ENCODE measurements at regions of chr2 and their contacts with region 1.

Region 1: GRCh38 chr2:62787386-62787785 is 81.9 kb downstream of the EHBP1 start:
- DNase-seq: peak; percentile 69
- H3K4me3 ChIP-seq: no peak overlapping the region
- H3K27ac ChIP-seq: no peak overlapping the region
- H3K4me1 ChIP-seq: peaks cover 4% of the 10 kb centered on the region
- H3K27me3 ChIP-seq: no peaks in the 10 kb centered on the region
- CTCF ChIP-seq: peak in 1 of 2 donors; percentile 12
- POLR2A ChIP-seq: no peak

Region 2: DNA sequence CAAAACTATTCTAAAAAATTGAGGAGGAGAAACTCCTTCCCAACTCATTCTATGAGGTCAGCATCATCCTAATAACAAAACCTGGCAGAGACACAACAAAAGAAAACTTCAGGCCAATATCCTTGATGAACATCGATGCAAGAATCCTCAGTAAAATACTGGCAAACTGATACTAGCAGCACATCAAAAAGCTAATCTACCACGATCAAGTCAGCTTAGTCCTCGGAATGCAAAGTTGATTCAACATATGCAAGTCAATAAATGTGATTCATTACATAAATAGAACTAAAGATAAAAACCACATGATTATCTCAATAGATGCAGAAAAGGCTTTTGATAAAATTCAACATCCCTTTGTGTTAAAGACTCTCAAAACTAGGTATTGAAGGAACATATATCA is 18.8 kb before region 1 on chr2:
- CTCF ChIA-PET with region 1: no interaction called
- POLR2A ChIA-PET with region 1: no interaction called
- dilution Hi-C with region 1: no loop called
- intact Hi-C with region 1: no loop called
- DNase-seq: no peak
- H3K4me3 ChIP-seq: no peak overlapping the region
- H3K27ac ChIP-seq: no peak overlapping the region
- H3K4me1 ChIP-seq: no peaks in the 10 kb centered on the region
- H3K27me3 ChIP-seq: no peaks in the 10 kb centered on the region
- CTCF ChIP-seq: no peak
- POLR2A ChIP-seq: no peak

Region 3: DNA sequence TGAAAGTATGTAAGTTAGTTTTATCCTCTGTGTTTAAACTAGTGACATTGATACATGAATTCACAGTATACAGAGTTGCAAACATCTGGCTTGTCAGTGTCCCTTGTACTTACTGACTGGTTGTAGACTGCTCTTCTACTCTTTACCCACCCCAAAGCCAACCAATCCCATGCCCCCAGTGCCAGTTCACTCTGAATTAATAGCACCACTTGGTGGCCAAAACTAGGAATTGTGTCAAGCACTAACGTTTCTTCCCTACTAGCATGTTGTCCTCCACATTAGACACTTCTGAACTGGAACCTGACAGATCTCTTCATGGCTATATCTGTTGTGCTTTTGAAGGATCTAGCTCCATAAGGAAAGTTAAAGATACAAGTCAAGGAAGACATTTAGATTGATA is 236.1 kb after region 1 on chr2:
- CTCF ChIA-PET with region 1: interaction called, 10 read pairs
- POLR2A ChIA-PET with region 1: no interaction called
- dilution Hi-C with region 1: no loop called
- intact Hi-C with region 1: loop called (anchors 1 kb)
- DNase-seq: peak; percentile 67
- H3K4me3 ChIP-seq: no peak overlapping the region
- H3K27ac ChIP-seq: no peak overlapping the region
- H3K4me1 ChIP-seq: peaks cover 3% of the 10 kb centered on the region
- H3K27me3 ChIP-seq: no peaks in the 10 kb centered on the region
- CTCF ChIP-seq: peak; percentile 42 to 43
- POLR2A ChIP-seq: no peak

Region 4: DNA sequence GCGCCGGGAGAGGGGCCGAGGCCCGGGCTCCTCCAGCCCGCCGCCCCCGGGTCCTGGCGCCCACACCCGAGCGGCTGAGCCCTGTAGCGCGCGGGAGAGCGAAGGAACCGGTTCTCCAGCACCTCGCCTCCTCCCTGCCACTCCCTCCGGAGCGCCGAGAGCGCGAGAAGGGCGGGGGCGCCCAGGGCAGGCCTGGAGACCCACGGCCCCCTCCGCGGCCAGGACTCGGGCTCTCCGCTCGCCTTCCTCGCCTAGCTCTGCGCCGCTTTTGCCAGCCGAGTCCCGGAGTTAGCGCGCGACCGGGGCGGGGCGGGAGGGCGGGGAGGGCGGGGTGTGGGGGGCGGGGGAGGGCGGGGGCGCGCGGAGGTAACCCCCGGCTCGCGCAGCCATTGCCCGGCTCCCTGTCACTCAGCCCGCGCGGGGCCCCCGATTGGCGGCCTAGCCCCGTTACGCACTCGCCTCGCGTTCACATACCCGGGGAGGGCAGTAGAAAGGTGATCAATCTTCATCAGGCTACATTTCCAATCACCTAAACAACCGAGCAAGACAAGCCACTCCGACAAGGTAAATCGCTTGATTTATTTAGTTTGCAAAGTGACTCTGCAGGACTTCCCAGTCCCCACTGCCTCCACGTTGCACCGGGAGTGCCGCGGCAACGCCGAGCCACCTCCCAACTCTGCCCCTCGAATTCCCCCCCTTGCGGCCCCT is 263.1 kb after region 1 on chr2 and contains the start of gene OTX1:
- CTCF ChIA-PET with region 1: no interaction called
- POLR2A ChIA-PET with region 1: no interaction called
- dilution Hi-C with region 1: no loop called
- intact Hi-C with region 1: loop called (anchors 1 kb)
- DNase-seq: peak; percentile 39
- H3K4me3 ChIP-seq: peak within 1 kb of the TSS; percentile 8 to 42 (median 41)
- H3K27ac ChIP-seq: no peak within 1 kb of the TSS
- H3K4me1 ChIP-seq: peaks cover 25% of the 10 kb centered on the region
- H3K27me3 ChIP-seq: peaks cover 71 to 76% of the 10 kb centered on the region in 2 experiments
- CTCF ChIP-seq: no peak
- POLR2A ChIP-seq: no peak
- total RNA-seq, gene OTX1: 0.30 TPM in 1 of 2 replicates, not detected in the other

Region 5: GRCh38 chr2:63189026-63189425 is 401.6 kb after region 1 on chr2:
- CTCF ChIA-PET with region 1: interaction called, 4 read pairs
- POLR2A ChIA-PET with region 1: no interaction called
- dilution Hi-C with region 1: no loop called
- intact Hi-C with region 1: loop called (anchors 1 kb)
- DNase-seq: peak; percentile 39
- H3K4me3 ChIP-seq: no peak overlapping the region
- H3K27ac ChIP-seq: no peak overlapping the region
- H3K4me1 ChIP-seq: no peaks in the 10 kb centered on the region
- H3K27me3 ChIP-seq: no peaks in the 10 kb centered on the region
- CTCF ChIP-seq: peak; percentile 73 to 88
- POLR2A ChIP-seq: no peak

Region 6: DNA sequence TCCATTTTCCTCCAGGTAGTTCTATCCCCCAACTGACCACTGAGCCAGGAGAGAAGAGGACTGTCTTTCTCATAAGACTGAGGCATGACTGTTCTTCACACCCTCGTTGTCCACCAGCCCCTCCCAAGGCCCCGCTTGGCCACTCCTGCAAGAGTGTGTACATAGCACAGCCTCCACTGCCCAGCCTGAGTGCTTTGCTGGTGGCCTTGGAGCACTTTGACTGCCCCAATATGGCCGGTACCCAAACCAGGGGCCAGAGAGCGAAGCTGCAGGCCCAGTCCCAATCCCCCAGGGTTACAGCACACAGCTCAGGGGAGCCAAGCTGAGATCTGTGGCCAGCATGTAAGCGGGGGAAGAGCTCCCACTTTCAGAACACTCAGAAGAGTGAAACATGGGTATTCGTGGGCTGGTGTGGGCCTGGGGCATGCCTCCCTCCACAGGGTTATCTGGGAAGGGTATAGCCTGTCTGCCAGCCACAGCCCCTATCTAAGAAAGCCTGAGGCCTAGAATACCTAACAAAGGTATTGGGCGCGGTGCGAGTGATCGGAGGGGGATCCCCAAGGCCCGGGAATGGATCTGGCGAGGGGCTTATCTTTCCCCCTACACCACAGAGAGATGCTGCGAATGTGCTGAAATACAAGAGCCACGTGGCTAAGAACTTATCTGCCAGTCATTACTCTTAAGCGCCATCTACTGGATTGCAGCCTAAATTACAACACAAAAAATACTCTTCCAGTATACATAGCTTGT is 637.1 kb after region 1 on chr2:
- CTCF ChIA-PET with region 1: interaction called, 9 read pairs
- POLR2A ChIA-PET with region 1: no interaction called
- dilution Hi-C with region 1: no loop called
- intact Hi-C with region 1: loop called (anchors 1 kb)
- DNase-seq: peak; percentile 33
- H3K4me3 ChIP-seq: no peak overlapping the region
- H3K27ac ChIP-seq: no peak overlapping the region
- H3K4me1 ChIP-seq: no peaks in the 10 kb centered on the region
- H3K27me3 ChIP-seq: no peaks in the 10 kb centered on the region
- CTCF ChIP-seq: peak; percentile 55 to 56
- POLR2A ChIP-seq: no peak

Region 7: DNA sequence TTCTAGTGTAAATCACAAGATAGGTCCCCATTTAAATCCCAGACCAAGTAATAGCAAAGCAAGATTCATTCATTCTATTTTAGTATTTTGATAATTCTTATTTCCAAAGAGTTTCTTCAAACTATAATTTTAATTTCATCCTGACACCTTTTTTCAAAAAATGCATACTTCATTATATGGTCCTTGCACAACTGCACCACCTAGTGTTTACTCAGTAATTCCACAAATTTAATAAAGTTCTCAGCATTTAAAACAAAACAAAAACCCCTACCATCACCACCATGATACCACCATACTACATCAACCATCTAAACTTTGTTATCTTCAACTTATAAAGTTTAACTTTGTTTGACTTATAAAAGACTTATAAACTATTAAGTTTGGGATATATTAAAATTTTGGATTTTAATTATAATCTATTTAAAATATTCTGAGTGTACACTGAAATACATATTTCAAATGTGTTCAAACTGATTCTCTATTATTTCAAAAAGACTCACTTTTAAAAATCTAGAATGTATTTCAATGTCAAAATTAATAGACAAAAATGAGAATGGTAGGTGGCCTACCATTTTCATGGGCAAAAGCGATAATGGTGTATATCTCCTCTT is 756.7 kb after region 1 on chr2:
- CTCF ChIA-PET with region 1: interaction called, 8 read pairs
- POLR2A ChIA-PET with region 1: no interaction called
- dilution Hi-C with region 1: no loop called
- intact Hi-C with region 1: loop called (anchors 5 kb)
- DNase-seq: peak; percentile 42
- H3K4me3 ChIP-seq: no peak overlapping the region
- H3K27ac ChIP-seq: no peak overlapping the region
- H3K4me1 ChIP-seq: no peaks in the 10 kb centered on the region
- H3K27me3 ChIP-seq: no peaks in the 10 kb centered on the region
- CTCF ChIP-seq: peak; percentile 21 to 29
- POLR2A ChIP-seq: no peak

Region 8: GRCh38 chr2:63588385-63589147 is 801.2 kb after region 1 on chr2 and contains the starts of genes MDH1 and WDPCP:
- CTCF ChIA-PET with region 1: no interaction called
- POLR2A ChIA-PET with region 1: no interaction called
- dilution Hi-C with region 1: no loop called
- intact Hi-C with region 1: loop called (anchors 5 kb)
- DNase-seq: peak; percentile 99
- H3K4me3 ChIP-seq: peak within 1 kb of the TSS; percentile 62 to 89 (median 85)
- H3K27ac ChIP-seq: peak within 1 kb of the TSS; percentile 67
- H3K4me1 ChIP-seq: peaks cover 18% of the 10 kb centered on the region
- H3K27me3 ChIP-seq: no peaks in the 10 kb centered on the region
- CTCF ChIP-seq: no peak
- POLR2A ChIP-seq: peak; percentile 84
- total RNA-seq, gene MDH1: 98.8 and 107 TPM in 2 replicates
- total RNA-seq, gene WDPCP: 6.9 and 8.8 TPM in 2 replicates